Activated CD4-positive, alpha-beta T cell treated with anti-CD3 and anti-CD28 coated beads for 36 hours (primary cell): ENCODE measurements at regions of chr5 and their contacts with region 1.

Region 1: GRCh38 chr5:39274398-39275085 is 55.2 kb upstream of the FYB1 start:
- DNase-seq: no peak
- ATAC-seq: peak; percentile 62
- H3K4me3 Mint-ChIP-seq: peak overlapping the region; percentile 77
- H3K27ac Mint-ChIP-seq: peak overlapping the region; percentile 98
- H3K4me1 Mint-ChIP-seq: peaks cover 48% of the 10 kb centered on the region
- H3K27me3 Mint-ChIP-seq: no peaks in the 10 kb centered on the region

Region 2: DNA sequence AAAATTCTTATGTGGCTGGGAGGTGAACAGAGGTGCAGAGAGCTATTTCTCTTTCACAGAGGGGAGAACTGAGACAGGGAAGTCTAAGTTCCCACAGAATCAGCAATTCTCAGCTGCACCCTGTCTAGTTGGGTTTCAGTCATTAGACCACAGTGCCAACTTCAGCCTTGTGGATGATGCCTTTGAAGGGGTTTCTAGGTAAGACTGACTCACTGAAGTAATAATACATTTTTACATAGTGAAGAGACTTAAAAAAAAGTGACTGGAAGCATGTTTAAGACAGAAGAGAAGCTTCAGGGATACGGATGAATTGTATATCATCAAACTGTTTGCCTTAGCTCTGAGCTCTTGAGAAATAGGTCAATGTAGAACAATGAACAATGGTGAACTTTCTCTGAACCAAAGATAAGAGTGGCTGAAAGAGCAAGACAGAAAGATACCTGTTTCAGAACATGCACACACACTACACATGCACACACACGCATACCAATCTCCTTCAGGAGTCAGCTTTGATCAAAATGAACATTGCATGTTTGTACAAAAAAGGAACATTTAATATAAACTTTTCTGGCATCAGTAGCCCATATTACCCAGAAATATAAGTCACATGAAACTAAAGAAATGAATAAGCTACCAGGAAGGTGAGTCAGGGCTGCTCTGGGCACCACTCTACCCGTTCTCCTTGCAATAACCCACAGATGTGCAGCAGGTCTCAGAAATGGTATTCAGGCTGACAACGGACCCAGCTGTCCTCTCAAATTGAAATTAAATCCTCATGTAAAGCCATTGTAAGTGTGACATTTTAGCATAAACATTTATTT is 42.6 kb before region 1 on chr5:
- CTCF ChIA-PET with region 1: interaction called, 4 read pairs
- POLR2A ChIA-PET with region 1: interaction called, 3 read pairs
- intact Hi-C with region 1: loop called in 1 of 2 experiments (anchors 1 kb)
- DNase-seq: peak; percentile 76
- ATAC-seq: peak; percentile 93
- H3K4me3 Mint-ChIP-seq: peak overlapping the region; percentile 59
- H3K27ac Mint-ChIP-seq: peak overlapping the region; percentile 94
- H3K4me1 Mint-ChIP-seq: peaks cover 13% of the 10 kb centered on the region
- H3K27me3 Mint-ChIP-seq: no peaks in the 10 kb centered on the region

Region 3: DNA sequence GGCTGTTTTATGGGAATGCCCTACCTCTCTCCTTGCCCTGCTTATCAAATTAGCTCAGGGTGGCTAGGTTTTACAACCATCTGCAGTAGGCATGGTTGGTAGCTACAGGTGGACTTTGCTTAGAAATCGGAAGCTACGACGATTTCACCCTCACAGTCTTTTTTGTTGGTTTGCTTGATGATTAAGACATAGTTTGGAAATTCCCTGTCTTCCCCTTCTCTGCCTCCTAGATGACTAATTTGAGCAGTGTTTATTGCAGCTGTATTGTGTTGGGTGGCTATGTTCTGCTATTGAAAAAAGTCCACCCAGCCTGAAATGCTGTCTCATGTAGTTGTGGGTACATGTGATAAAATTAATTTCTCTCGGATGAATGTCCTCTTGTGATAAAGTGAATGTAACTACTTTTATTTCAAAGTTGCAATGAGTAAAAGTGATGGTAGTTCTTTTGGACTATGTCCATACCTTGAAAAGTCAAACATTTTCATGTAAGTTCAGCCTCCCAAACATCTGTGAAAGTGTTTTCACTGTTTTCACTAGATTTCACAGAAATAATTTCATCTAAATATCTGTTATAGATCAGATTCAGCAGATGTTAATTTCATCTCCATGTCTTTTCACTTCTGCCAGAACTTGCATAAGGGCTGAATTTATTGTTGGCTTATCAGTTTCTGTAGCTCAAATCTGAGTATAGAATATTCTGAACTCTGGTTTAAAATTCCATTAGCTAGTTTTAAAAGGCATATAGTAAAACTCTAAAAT is 17.9 kb before region 1 on chr5:
- CTCF ChIA-PET with region 1: interaction called, 4 read pairs
- POLR2A ChIA-PET with region 1: no interaction called
- intact Hi-C with region 1: loop called in 1 of 2 experiments (anchors 2 kb)
- DNase-seq: no peak
- ATAC-seq: peak; percentile 93
- H3K4me3 Mint-ChIP-seq: no peak overlapping the region
- H3K27ac Mint-ChIP-seq: no peak overlapping the region
- H3K4me1 Mint-ChIP-seq: peaks cover 11% of the 10 kb centered on the region
- H3K27me3 Mint-ChIP-seq: no peaks in the 10 kb centered on the region